ENCODE measurements at regions of chr17 and their contacts with region 1.

Region 1: GRCh38 chr17:30477083-30477773 is at the start of gene GOSR1:
- DNase-seq: peak; percentile 94
- ATAC-seq: peak; percentile 98
- H3K4me3 Mint-ChIP-seq: peak within 1 kb of the TSS; percentile 99
- H3K27ac Mint-ChIP-seq: peak within 1 kb of the TSS; percentile 98
- H3K4me1 Mint-ChIP-seq: peaks cover 15% of the 10 kb centered on the region
- H3K27me3 Mint-ChIP-seq: peaks cover 4% of the 10 kb centered on the region
- CTCF ChIP-seq: peak; percentile 44
- total RNA-seq, gene GOSR1: 37.4 to 41.1 TPM (median 39.3 TPM) in 3 replicates

Region 2: DNA sequence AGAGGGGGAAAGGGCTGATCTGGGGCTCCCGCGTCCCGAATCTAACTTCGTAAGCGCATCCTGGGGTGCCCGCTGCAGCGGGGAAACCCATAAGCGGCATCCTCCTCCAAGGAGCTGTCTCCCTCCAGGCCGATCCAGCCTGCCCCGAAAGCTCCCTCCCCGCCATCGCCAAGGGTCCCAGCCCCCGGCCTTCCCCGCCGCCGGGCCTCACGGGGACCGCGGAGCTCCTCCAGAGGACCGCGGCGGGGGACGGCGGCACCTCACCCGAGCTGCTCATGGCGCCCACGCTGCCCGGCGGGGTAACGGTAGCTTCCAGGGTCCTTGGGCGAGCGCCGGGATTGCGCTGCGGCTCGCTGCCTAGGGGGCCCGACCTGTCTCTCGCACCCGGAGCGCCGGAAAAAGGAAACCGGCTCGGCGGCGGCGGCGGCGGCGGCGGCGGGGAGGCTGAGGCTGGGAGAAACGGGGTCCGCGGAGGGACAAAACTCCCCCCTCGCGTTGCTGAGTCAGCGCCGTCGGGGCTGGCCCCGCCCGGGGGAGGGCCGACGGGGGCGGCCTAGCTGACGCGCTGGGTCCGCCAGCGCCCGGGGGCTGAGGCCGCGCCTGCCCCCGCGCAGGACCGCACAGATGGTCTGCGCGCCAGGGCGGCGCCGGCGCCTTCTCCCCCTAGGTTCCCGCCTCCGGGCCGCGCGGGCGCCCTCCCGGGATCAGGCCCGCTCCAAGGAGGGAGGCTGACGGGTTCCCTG is 185.5 kb before region 1 on chr17 and contains the start of gene BLMH:
- CTCF ChIA-PET with region 1: interaction called, 14 read pairs
- POLR2A ChIA-PET with region 1: no interaction called
- DNase-seq: peak; percentile 72
- ATAC-seq: peak; percentile 85
- H3K4me3 Mint-ChIP-seq: peak within 1 kb of the TSS; percentile 87
- H3K27ac Mint-ChIP-seq: 0 out of 2 replicates have a peak within 1 kb of the TSS, but pooled peaks have one; percentile 41
- H3K4me1 Mint-ChIP-seq: peaks cover 15% of the 10 kb centered on the region
- H3K27me3 Mint-ChIP-seq: peaks cover 5% of the 10 kb centered on the region; the same call in 1 of the 2 replicates
- CTCF ChIP-seq: no peak
- total RNA-seq, gene BLMH: 63.9 to 67.3 TPM (median 65.3 TPM) in 3 replicates

Region 3: DNA sequence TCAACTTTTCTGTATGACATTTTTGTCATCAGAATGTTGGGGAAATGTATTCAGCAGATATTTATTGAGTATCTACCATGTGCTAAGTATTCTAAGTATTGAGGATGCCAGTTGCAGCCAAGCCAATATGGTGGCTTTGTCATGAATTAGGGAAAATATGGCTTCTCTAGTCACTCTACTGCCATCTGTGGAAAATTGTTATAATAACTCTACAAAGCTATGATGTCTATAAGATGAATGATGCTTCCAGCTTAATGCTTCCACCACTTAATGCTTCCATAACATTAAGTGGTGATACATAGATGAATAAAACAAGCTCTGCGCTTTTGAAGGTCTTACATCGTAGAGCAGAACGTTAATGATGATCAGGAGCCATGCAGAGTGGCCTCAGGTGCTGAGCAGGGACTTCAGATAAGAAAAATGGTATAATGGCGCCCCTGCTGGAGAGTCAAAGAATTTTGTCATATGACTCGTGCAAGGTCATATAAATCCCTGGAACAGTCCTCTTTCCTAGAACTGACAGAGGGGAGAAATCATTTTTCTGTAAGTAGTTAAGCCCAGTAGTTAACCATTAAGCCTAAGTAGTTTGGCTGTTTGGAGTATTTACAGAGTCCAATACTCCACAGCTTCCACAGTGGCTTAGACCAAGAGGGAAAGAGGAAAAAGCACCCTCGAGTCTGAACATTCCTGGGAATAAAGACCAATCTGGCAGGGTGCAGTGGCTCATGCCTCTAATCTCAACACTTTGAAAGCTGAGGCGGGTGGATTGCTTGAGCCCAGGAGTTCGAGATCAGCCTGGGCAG is 140.7 kb before region 1 on chr17:
- CTCF ChIA-PET with region 1: interaction called, 11 read pairs
- POLR2A ChIA-PET with region 1: no interaction called
- DNase-seq: peak; percentile 62
- ATAC-seq: peak; percentile 46
- H3K4me3 Mint-ChIP-seq: no peak overlapping the region
- H3K27ac Mint-ChIP-seq: no peak overlapping the region
- H3K4me1 Mint-ChIP-seq: peaks cover 14% of the 10 kb centered on the region
- H3K27me3 Mint-ChIP-seq: peaks cover 35% of the 10 kb centered on the region
- CTCF ChIP-seq: peak; percentile 70

Region 4: GRCh38 chr17:30393911-30394867 is 83.0 kb before region 1 on chr17:
- CTCF ChIA-PET with region 1: no interaction called
- POLR2A ChIA-PET with region 1: no interaction called
- DNase-seq: no peak
- ATAC-seq: no peak
- H3K4me3 Mint-ChIP-seq: no peak overlapping the region
- H3K27ac Mint-ChIP-seq: no peak overlapping the region
- H3K4me1 Mint-ChIP-seq: 0 out of 2 replicates have a peak, but pooled peaks cover 2% of the 10 kb centered on the region
- H3K27me3 Mint-ChIP-seq: no peaks in the 10 kb centered on the region
- CTCF ChIP-seq: no peak

Region 5: GRCh38 chr17:30415491-30415890 is 61.7 kb before region 1 on chr17:
- CTCF ChIA-PET with region 1: no interaction called
- POLR2A ChIA-PET with region 1: no interaction called
- DNase-seq: no peak
- ATAC-seq: no peak
- H3K4me3 Mint-ChIP-seq: no peak overlapping the region
- H3K27ac Mint-ChIP-seq: no peak overlapping the region
- H3K4me1 Mint-ChIP-seq: 0 out of 2 replicates have a peak, but pooled peaks cover 4% of the 10 kb centered on the region
- H3K27me3 Mint-ChIP-seq: no peaks in the 10 kb centered on the region; the same call in 1 of the 2 replicates
- CTCF ChIP-seq: no peak

Region 6: DNA sequence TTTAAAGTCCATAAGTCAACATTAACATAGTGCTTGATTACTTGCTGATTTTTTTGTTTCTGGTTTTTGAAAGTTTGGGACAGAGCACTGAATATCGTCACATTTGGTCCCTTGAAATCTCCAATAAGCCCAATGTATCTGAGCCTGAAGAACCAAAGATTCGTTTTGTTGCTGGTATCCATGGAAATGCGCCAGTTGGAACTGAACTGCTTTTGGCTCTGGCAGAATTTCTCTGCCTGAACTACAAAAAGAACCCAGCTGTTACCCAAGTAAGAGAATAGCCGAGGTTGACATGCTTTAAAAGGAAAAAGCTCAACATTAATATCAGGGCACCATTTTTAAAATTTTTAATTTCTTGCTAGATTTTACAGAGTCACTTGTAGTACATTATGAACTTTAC is 27.7 kb before region 1 on chr17:
- CTCF ChIA-PET with region 1: no interaction called
- POLR2A ChIA-PET with region 1: no interaction called
- DNase-seq: no peak
- ATAC-seq: no peak
- H3K4me3 Mint-ChIP-seq: no peak overlapping the region
- H3K27ac Mint-ChIP-seq: no peak overlapping the region
- H3K4me1 Mint-ChIP-seq: no peaks in the 10 kb centered on the region
- H3K27me3 Mint-ChIP-seq: no peaks in the 10 kb centered on the region
- CTCF ChIP-seq: no peak

Region 7: DNA sequence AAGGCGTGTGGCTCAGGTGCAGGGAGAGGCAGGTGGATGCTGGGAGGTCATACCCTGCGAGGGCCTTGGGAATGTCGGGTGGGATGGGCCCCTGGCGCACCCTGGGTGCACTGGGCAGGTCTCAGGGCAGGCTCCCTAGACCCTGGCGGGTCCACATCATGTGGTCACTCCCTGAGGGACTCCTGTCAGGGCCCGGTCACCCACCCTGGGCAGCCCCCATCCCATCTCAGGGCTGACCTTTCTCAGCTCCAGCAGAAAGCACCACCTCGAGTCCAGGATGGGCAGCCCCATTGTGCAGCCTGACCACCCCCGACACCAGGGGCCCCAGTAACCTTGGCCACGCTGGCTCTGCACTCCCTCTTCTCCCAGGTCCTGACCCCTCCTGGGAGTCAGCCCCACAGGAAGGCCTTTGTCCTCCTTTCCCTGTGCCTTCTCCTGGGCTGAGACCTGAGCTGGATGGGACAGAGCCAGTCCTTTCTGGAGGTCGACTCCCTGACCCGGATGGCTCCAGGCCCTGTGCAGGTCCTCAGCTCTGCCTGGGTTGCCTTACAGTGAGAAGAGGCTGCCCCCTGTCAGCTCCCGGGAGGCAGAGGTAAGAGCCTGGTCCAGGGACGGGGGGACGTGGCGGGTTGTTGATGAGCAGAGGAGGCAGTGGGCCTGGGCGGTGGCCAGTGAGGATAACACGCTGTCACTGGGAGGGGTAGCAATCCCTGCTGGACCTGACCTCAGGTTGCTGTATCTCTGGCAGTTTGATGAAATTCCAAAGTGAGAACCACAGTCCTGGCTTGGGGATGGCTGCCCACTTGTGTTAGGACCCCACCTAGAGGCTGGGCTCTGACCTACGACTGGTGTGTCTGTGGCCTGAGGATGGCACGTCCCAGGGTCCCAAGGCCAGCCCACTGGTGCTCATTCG is 77.9 kb after region 1 on chr17:
- CTCF ChIA-PET with region 1: interaction called, 13 read pairs
- POLR2A ChIA-PET with region 1: no interaction called
- DNase-seq: peak; percentile 74
- ATAC-seq: peak; percentile 90
- H3K4me3 Mint-ChIP-seq: no peak overlapping the region
- H3K27ac Mint-ChIP-seq: no peak overlapping the region
- H3K4me1 Mint-ChIP-seq: peaks cover 7% of the 10 kb centered on the region
- H3K27me3 Mint-ChIP-seq: no peaks in the 10 kb centered on the region
- CTCF ChIP-seq: peak; percentile 5; the same call in 1 of the 2 replicates

Measured in WTC11 (cell line).